GM23248 (cell line): ENCODE measurements at regions of chr2 and their contacts with region 1.

Region 1: GRCh38 chr2:225122583-225123486 is 80.6 kb upstream of the DOCK10 start:
- DNase-seq: peak; percentile 56
- H3K4me3 ChIP-seq: peak overlapping the region; percentile 40
- H3K27ac ChIP-seq: no peak overlapping the region
- H3K4me1 ChIP-seq: peaks cover 29% of the 10 kb centered on the region
- H3K27me3 ChIP-seq: no peaks in the 10 kb centered on the region

Region 2: DNA sequence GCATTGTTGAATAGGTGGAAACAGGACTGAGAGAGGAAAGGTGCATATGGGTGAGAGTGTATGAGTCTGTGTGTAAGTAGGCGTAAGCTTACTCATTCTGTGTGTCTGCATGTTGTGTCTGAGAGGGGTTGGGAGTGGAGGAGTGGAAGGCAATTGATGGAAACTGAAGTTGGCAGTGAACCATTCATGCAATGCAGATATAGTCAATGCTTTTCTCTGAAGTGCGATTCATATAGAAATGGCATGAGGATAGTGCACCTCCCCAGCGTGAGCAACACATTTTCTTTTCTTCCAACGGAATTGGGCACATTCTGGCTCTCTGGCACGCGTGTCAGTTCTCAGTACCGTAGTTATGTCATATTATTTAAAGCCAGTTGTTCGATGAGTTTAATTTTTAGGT is 527.2 kb after region 1 on chr2:
- in situ Hi-C with region 1: loop called (anchors 10 kb)
- DNase-seq: no peak
- H3K4me3 ChIP-seq: no peak overlapping the region
- H3K27ac ChIP-seq: no peak overlapping the region
- H3K4me1 ChIP-seq: no peaks in the 10 kb centered on the region
- H3K27me3 ChIP-seq: peaks cover 12% of the 10 kb centered on the region; the same call in 1 of the 2 replicates